Activated T-helper 1 cell treated with anti-CD3 and anti-CD28 coated beads, Interleukin-12 subunit alpha, Interleukin-12 subunit beta, Interleukin-2, Interleukin-4 antibody, amounts not matched to agents 30 ng/mL and 10 ng/mL and 1 ng/mL, durations not matched to agents 14 hours and 24 hours and 36 hours (primary cell): ENCODE measurements at regions of chr14 and their contacts with region 1.

Region 1: GRCh38 chr14:61598980-61599379 is 96.3 kb upstream of the HIF1A start:
- DNase-seq: peak; percentile 34
- H3K4me3 Mint-ChIP-seq: peak overlapping the region; percentile 45
- H3K27ac Mint-ChIP-seq: peak overlapping the region; percentile 85
- H3K4me1 Mint-ChIP-seq: peaks cover 73% of the 10 kb centered on the region
- H3K27me3 Mint-ChIP-seq: no peaks in the 10 kb centered on the region

Region 2: GRCh38 chr14:61342486-61342885 is 256.5 kb before region 1 on chr14:
- intact Hi-C with region 1: loop called (anchors 1 kb)
- DNase-seq: peak; percentile 85
- H3K4me3 Mint-ChIP-seq: peak overlapping the region; percentile 82
- H3K27ac Mint-ChIP-seq: peak overlapping the region; percentile 97
- H3K4me1 Mint-ChIP-seq: peaks cover 92% of the 10 kb centered on the region
- H3K27me3 Mint-ChIP-seq: no peaks in the 10 kb centered on the region

Region 3: GRCh38 chr14:61525293-61526011 is 73.5 kb before region 1 on chr14:
- intact Hi-C with region 1: loop called (anchors 1 kb)
- DNase-seq: peak; percentile 65
- H3K4me3 Mint-ChIP-seq: peak overlapping the region; percentile 64
- H3K27ac Mint-ChIP-seq: peak overlapping the region; percentile 89
- H3K4me1 Mint-ChIP-seq: peaks cover 82% of the 10 kb centered on the region
- H3K27me3 Mint-ChIP-seq: no peaks in the 10 kb centered on the region

Region 4: GRCh38 chr14:61578745-61579144 is 20.2 kb before region 1 on chr14:
- intact Hi-C with region 1: loop called (anchors 1 kb)
- DNase-seq: no peak
- H3K4me3 Mint-ChIP-seq: no peak overlapping the region
- H3K27ac Mint-ChIP-seq: no peak overlapping the region
- H3K4me1 Mint-ChIP-seq: peaks cover 39% of the 10 kb centered on the region
- H3K27me3 Mint-ChIP-seq: peaks cover 7% of the 10 kb centered on the region

Region 5: GRCh38 chr14:61671082-61671481 is 72.1 kb after region 1 on chr14:
- intact Hi-C with region 1: loop called (anchors 2 kb)
- DNase-seq: peak; percentile 42
- H3K4me3 Mint-ChIP-seq: no peak overlapping the region
- H3K27ac Mint-ChIP-seq: no peak overlapping the region
- H3K4me1 Mint-ChIP-seq: peaks cover 9% of the 10 kb centered on the region
- H3K27me3 Mint-ChIP-seq: no peaks in the 10 kb centered on the region

Region 6: DNA sequence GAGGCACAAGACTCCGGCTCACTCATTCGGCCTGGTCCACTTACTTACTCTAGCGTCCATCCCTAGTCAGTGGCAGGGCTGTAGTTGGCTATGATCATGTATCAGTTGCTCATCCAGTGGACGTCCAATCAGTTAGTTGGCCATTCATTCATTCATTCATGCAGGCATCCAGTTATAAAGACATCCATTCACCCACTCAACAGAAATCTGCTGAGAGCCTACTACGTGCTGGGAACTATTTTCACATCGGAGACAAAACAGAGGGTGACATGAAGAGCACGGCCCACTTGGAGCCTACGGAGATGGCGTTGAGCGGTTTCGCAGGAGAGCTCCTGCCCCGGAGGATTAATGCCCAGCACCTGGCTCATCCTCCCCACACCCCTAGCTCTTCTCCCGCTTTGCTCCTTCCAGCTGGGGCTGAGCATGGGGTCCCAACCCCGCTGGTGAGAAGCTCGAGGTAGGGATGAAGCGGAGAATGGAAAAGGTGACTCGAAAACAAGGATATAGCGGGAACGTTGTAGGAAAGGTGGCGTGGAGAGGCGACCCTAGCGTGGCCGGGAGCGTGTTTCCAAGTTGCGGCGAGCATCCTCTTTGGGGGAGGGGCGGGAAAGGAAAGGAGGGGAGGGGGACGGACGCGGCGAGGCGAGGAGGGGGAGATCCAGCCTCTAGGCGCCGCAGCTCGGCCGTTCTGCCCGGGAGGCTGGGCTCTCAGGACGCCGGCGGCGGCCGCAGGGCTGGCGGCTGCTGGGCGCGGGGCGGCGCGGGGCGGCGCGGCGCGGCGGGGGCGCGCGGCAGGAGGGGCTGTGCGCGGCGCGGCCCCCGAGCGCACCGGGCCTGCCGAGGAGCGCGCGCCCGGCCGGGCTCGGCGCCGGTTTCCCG is 213.1 kb after region 1 on chr14:
- intact Hi-C with region 1: no loop called
- DNase-seq: no peak
- H3K4me3 Mint-ChIP-seq: peak within 1 kb of the TSS; percentile 83
- H3K27ac Mint-ChIP-seq: no peak within 1 kb of the TSS
- H3K4me1 Mint-ChIP-seq: peaks cover 15% of the 10 kb centered on the region
- H3K27me3 Mint-ChIP-seq: peaks cover 54% of the 10 kb centered on the region